HepG2 (cell line): ENCODE measurements at regions of chr1 and their contacts with region 1.

Region 1: DNA sequence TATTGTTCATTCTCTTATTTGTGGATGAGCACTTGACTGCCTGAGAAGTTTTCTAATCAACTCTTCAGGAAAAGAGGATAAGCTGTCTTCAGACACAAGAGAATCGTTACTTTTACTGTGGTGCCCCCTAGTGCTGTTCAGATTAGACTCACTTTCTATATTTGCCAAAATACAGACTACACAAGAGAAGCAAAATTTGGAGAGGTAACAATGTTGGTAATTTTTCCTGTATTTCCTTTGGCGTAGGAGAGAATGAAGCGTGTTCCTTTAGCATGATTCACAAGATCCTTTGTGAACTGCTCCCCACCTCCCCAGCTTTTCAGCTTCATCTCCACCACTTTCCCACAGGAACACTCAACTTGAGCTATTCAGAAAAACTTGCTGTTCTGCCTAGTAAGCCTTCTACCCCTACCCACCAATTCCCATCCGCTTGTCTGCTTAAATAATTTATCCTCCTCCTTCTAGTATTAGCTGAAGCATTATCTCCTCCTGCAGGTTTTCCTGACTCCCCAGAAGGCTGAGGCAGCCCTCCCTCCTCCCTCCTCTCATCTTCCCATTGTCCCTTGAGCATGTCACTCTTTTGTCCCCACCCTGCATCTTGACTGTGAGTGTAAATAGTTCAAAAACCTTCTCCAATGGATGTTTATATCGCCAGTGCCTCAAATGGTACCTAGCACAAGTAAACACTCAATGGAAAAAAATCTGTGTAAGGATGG is 4.5 kb downstream of the TNFSF4 start:
- DNase-seq: peak; percentile 42
- ATAC-seq: peak; percentile 69
- H3K4me3 ChIP-seq: peak overlapping the region; percentile 18 to 48 (median 29)
- H3K27ac ChIP-seq: no peak overlapping the region
- H3K4me1 ChIP-seq: peaks cover 58% of the 10 kb centered on the region
- H3K27me3 ChIP-seq: no peaks in the 10 kb centered on the region
- CTCF ChIP-seq: peak; percentile 78
- EP300 ChIP-seq: no peak
- POLR2A ChIP-seq: no peak
- RAD21 ChIP-seq: peak; percentile 65

Region 2: GRCh38 chr1:172826096-172826743 is 376.4 kb before region 1 on chr1:
- CTCF ChIA-PET with region 1: interaction called, 13 read pairs
- POLR2A ChIA-PET with region 1: interaction called, 6 read pairs
- in situ Hi-C with region 1: loop called (anchors 5 kb)
- intact Hi-C with region 1: loop called (anchors 1 kb)
- DNase-seq: peak; percentile 21
- ATAC-seq: peak; percentile 73
- H3K4me3 ChIP-seq: peak overlapping the region in 2 of 3 experiments; percentile 14 to 46; a peak in 2 of 6 replicates
- H3K27ac ChIP-seq: no peak overlapping the region
- H3K4me1 ChIP-seq: peaks cover 9% of the 10 kb centered on the region
- H3K27me3 ChIP-seq: no peaks in the 10 kb centered on the region
- CTCF ChIP-seq: peak; percentile 72
- EP300 ChIP-seq: no peak
- POLR2A ChIP-seq: no peak
- RAD21 ChIP-seq: peak; percentile 52; the same call in 1 of the 2 replicates

Region 3: DNA sequence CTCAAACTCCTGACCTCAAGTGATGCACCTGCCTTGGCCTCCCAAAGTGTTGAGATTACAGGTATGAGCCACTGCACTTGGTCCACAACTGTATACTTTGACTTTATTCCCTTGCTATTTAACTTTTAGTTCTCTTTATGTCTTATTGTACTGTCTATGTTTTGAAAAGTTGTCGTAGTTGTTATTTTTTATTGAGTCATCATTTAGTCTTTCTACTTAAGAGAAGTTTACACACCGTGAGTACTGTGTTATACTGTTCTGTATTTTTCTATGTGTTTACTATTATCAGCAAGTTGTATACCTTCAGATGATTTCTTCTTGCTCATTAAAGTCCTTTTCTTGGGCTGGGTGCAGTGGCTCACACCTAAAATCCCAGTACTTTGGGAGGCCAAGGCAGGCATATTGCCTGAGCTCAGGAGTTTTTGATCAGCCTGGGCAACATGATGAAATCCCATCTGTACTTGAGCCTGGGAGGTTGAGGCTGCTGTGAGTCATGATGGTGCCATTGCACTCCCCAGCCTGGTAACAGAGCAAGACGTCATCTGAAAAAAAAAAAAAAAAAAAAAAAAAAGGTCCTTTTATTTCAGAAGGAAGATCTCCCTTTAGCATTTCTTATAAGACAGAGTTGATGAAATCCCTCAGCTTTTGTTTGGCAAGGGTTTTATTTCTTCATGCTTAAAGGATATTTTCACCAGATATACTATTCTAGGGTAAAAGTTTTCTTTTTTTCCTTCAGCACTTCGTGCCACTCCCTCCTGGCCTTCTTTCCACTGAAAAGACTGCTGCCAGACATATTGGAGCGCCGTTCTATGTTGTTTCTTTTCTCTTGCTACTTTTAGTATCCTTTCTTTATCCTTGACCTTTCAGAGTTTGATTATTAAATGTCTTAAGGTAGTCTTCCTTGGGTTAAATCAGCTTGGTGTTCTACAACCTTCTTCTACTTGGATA is 199.4 kb before region 1 on chr1:
- CTCF ChIA-PET with region 1: no interaction called
- POLR2A ChIA-PET with region 1: no interaction called
- in situ Hi-C with region 1: no loop called
- intact Hi-C with region 1: loop called (anchors 1 kb)
- DNase-seq: no peak
- ATAC-seq: no peak
- H3K4me3 ChIP-seq: no peak overlapping the region
- H3K27ac ChIP-seq: no peak overlapping the region
- H3K4me1 ChIP-seq: 0 out of 2 replicates have a peak, but pooled peaks cover 9% of the 10 kb centered on the region
- H3K27me3 ChIP-seq: no peaks in the 10 kb centered on the region; a peak in 1 of 5 replicates
- CTCF ChIP-seq: no peak
- EP300 ChIP-seq: no peak
- POLR2A ChIP-seq: no peak
- RAD21 ChIP-seq: no peak

Region 4: DNA sequence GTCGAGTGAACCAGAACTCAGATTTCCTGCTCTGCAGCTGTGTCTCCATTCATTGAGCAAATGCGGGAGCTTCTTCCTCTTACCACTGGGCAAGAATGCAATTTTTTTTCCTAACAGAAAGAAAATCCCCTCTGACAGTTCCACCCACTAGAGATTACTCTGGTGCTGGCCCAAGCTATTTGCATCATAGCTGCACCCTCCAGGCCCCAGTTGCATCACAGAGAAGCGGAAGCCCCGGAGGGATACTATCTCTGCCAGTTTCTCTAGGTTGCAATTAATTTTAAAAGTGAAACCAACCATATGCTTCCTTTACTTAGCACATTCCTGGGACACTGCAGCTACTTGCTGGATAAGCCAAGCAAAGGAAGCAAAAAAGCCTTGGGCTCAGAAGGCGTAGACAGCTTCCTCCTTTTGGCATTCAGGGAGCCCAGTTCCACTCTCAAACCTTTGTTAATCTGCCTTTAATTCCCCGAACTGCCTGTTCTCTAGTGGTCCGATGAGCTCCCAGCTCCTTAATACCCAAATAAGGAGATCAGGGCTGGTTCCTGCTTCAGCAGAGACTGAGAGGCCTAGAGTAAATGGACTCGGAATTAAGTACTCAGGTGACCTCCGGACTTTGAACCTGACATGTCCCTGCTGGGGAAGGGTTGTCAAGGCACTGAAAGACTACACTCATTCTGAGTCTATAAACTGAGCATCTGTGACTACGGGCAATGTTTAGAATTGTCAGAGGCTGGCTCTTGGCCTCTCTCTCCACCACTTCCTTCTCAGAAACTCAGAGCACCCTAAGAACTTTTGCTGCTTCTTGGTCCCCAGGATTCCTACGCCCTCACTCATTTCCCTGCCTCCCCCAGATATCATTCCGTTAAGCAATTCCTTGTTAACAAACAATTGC is 79.4 kb before region 1 on chr1:
- CTCF ChIA-PET with region 1: no interaction called
- POLR2A ChIA-PET with region 1: interaction called, 11 read pairs
- in situ Hi-C with region 1: no loop called
- intact Hi-C with region 1: no loop called
- DNase-seq: peak; percentile 93
- ATAC-seq: peak; percentile 86
- H3K4me3 ChIP-seq: peak overlapping the region; percentile 48 to 67 (median 64)
- H3K27ac ChIP-seq: peak overlapping the region; percentile 95
- H3K4me1 ChIP-seq: peaks cover 63% of the 10 kb centered on the region
- H3K27me3 ChIP-seq: no peaks in the 10 kb centered on the region
- CTCF ChIP-seq: no peak
- EP300 ChIP-seq: peak in 1 of 2 experiments; percentile 66; a peak in 2 of 4 replicates
- POLR2A ChIP-seq: peak; percentile 15 to 41; a peak in 2 of 4 replicates
- RAD21 ChIP-seq: no peak